Calu3 (cell line): ENCODE measurements at regions of chr13 and their contacts with region 1.

Region 1: DNA sequence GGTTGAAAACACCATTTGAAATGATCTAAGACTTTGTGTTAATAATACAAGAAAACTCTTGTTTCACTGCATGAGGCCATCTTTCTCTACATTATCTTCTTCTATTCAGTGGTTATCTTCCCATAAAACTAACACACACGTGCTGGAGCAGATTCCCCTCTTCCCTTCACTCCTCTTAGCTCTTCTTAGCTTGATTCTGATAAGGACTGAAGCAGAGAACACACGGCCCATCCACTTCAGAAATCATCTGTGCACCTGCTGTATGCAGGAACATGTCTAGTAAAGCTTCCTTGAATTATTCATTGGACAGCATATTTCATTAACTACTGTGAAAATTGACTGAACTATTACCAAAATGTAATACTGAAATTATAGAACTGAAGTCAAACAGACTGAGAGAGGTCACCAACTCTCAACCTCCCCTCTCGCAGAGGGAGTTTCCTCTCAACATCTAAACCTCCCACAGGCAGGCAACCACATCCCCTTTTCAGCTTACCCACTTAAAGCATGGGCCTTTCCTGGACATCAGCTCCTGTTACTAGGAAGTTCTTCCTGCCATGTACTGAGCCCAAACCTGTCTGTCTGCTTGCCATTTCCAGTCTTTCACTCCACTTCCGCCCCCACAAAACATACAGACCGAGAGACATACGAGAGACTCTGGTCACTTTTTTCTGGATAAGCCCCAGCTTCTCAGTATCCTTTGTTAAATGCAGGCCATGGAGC is 113.9 kb downstream of the CRYL1 start:
- DNase-seq: no peak
- H3K4me3 Mint-ChIP-seq: no peak overlapping the region
- H3K27ac Mint-ChIP-seq: no peak overlapping the region
- H3K4me1 Mint-ChIP-seq: no peaks in the 10 kb centered on the region
- H3K27me3 Mint-ChIP-seq: no peaks in the 10 kb centered on the region
- CTCF ChIP-seq: no peak

Region 2: DNA sequence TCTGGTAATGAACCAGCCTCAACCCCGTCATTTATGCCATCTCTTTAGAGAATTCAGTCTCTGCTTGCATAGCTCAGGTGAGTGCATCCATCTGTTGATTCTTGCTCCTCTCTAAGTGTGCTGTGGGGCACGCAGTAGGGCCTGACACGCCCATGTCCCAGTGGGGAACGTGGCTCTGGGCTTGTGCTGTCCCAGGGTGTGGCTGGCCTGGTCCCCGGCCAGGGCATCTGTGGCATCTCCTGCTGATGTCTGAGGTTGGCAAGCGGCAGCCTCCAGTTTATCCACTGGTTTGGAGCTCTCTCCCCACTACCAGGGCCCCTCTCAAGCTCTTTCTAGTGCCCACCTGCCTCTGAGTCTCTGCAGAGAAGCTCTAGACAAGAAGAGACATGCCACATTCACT is 33.1 kb before region 1 on chr13:
- CTCF ChIA-PET with region 1: no interaction called
- intact Hi-C with region 1: loop called (anchors 5 kb)
- DNase-seq: no peak
- H3K4me3 Mint-ChIP-seq: no peak overlapping the region
- H3K27ac Mint-ChIP-seq: no peak overlapping the region
- H3K4me1 Mint-ChIP-seq: no peaks in the 10 kb centered on the region
- H3K27me3 Mint-ChIP-seq: no peaks in the 10 kb centered on the region
- CTCF ChIP-seq: no peak

Region 3: GRCh38 chr13:20654156-20654555 is 242.4 kb after region 1 on chr13:
- CTCF ChIA-PET with region 1: no interaction called
- intact Hi-C with region 1: no loop called
- DNase-seq: no peak
- H3K4me3 Mint-ChIP-seq: no peak overlapping the region
- H3K27ac Mint-ChIP-seq: no peak overlapping the region
- H3K4me1 Mint-ChIP-seq: peaks cover 6% of the 10 kb centered on the region
- H3K27me3 Mint-ChIP-seq: no peaks in the 10 kb centered on the region
- CTCF ChIP-seq: no peak